AG04449 (cell line): ENCODE measurements at regions of chr7 and their contacts with region 1.

Region 1: DNA sequence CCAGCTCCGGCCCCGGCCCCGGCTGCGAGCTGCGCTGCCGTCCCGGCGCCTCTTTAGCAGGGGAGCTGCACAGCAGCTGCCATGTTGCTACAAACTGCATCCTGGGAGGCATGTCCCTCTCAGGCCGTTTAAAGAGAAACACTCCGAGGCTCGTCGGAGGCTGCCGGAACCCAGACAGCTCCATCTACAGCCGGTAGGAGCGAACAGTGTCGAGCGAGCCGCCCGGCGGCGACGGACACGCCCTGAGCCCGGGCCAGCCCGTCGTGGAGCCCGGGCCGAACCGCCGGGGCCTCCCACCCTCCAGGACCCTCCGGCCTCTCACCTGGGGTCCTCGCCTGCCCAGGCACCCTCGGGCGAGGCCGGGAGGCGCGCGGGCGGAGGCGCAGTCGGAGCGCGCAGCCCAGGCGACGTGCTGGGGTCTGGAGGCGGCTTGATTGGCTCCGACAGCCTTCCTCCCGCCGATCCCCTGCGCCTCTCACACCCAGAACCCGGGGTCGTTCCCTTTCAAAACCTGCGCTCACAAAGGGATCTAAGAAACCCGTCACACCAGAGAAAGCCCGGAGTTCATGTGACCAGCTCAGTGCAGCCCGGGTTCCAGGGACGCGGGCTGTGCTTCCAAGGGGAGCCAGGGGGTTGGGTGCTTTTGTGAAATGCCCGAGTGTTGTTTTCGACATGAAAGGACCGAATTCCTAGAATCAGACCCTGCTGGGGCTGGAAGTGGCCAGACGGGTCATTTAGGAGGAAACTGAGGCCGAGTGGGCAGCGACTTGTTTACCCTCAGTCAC is at the start of gene ZNF777:
- DNase-seq: peak; percentile 21
- H3K4me3 ChIP-seq: peak within 1 kb of the TSS; percentile 67
- CTCF ChIP-seq: peak; percentile 66

Region 2: DNA sequence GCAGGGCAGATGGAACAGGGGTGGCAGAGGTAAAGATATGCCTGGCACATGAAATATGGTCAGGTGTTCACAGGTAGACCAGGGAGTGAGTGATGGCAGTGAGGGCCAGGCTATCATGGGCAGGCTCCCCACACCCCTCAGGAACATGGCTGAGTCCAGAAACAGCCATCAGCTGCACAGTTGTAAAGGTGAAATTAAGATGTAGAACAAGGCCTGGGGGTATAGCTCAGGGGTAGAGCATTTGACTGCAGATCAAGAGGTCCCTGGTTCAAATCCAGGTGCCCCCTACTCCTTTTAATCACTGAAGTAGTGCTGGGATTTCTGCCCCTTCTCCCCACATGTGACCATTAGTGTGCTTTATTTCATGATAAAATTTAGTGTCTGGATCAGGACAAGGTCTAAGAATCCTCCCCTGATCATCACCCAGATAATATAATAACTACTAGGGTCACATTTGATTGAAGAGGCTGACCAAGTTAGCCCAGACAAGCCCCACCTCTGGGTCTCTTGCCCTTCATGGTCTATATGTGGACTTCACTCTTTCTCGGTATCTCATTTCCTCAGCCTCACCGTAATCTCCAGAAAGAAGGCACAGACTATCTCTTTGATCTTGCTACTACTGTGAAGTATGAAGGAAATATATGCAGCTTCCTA is 129.6 kb before region 1 on chr7:
- CTCF ChIA-PET with region 1: no interaction called
- POLR2A ChIA-PET with region 1: no interaction called
- DNase-seq: no peak
- H3K4me3 ChIP-seq: no peak overlapping the region
- CTCF ChIP-seq: no peak

Region 3: GRCh38 chr7:149444287-149444686 is 16.4 kb before region 1 on chr7:
- CTCF ChIA-PET with region 1: interaction called, 10 read pairs
- POLR2A ChIA-PET with region 1: interaction called, 4 read pairs
- DNase-seq: no peak
- H3K4me3 ChIP-seq: no peak overlapping the region
- CTCF ChIP-seq: no peak

Region 4: GRCh38 chr7:149479608-149480007 is 18.9 kb after region 1 on chr7:
- CTCF ChIA-PET with region 1: interaction called, 10 read pairs
- POLR2A ChIA-PET with region 1: interaction called, 3 read pairs
- DNase-seq: no peak
- H3K4me3 ChIP-seq: no peak overlapping the region
- CTCF ChIP-seq: no peak

Region 5: DNA sequence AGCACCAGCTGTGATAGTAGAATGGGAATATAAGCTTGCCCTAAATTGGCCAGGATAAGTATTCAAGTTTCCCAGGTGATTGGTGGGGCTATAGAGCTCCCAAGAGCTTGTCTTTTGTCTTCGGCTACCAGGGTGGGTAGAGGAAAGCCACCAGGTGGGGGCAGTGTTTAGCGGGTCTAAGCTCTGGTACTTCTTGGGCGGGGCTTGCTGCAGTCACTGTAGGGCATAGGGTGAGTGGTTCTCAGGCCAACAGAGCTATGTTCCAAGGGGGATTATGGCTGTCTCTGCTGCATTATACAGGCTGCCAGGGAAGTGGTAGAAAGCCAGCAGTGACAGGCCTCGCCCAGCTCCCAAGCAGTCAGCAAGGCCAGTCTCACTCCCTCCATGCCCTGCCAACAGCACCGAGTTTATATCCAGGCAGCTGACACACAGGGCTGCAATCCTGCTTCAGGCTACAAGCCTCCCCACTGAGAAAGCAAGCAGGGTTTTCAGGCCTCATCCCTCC is 202.0 kb after region 1 on chr7:
- CTCF ChIA-PET with region 1: no interaction called
- POLR2A ChIA-PET with region 1: no interaction called
- DNase-seq: no peak
- H3K4me3 ChIP-seq: no peak overlapping the region
- CTCF ChIP-seq: peak; percentile 55